ENCODE measurements at regions of chr3 and their contacts with region 1.

Region 1: GRCh38 chr3:150293401-150294061 is 114.6 kb upstream of the TSC22D2 start:
- DNase-seq: peak; percentile 88
- H3K4me3 ChIP-seq: no peak overlapping the region
- CTCF ChIP-seq: no peak

Region 2: DNA sequence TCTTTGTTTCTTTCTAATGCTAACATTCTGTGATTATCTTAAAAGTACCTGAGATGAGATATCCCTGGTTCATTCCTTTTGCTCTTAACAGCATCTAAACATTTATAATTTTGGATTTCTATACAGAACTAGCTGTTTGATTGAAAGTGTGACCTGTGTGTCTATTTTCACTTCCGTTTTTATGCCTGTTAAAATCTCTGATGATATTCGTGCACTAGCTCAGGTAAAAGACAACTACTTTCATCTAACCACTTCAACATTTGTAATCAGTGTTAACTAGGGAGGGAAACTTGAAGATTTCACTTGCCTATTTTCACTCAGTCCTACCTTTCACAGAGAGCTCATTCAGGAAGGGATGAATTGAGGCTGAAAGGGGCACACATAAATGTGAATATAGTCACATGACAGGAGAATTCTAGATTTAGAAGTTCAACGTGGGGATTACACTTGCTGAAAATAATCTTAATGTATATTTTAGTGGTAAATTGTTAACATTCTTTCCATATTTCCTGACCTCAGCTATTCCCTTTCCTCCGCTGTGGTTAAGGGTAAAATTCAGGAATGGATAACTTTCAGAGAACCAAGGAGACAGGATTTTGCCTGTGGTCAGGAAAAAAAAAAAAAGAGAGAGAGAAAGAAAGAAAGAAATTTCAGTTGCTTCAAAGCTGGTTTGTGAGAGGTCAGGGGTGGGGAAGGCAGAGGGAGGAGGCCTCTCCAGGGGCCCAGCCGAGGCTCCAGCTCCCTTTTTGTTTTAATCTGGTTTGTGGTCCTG is 45.2 kb before region 1 on chr3:
- CTCF ChIA-PET with region 1: interaction called, 4 read pairs
- POLR2A ChIA-PET with region 1: interaction called, 20 read pairs
- DNase-seq: peak; percentile 80
- H3K4me3 ChIP-seq: no peak overlapping the region
- CTCF ChIP-seq: no peak

Region 3: GRCh38 chr3:150327678-150328637 is 34.4 kb after region 1 on chr3:
- CTCF ChIA-PET with region 1: no interaction called
- POLR2A ChIA-PET with region 1: no interaction called
- DNase-seq: no peak
- H3K4me3 ChIP-seq: no peak overlapping the region
- CTCF ChIP-seq: no peak